Endothelial cell of umbilical vein (primary cell): ENCODE measurements at regions of chr2 and their contacts with region 1.

Region 1: GRCh38 chr2:190996338-190996946 is 17.5 kb downstream of the STAT1 start:
- DNase-seq: peak; percentile 48
- H3K4me3 ChIP-seq: no peak overlapping the region
- H3K27ac ChIP-seq: no peak overlapping the region
- H3K4me1 ChIP-seq: no peaks in the 10 kb centered on the region
- H3K27me3 ChIP-seq: no peaks in the 10 kb centered on the region
- CTCF ChIP-seq: peak; percentile 74 to 86
- POLR2A ChIP-seq: no peak

Region 2: DNA sequence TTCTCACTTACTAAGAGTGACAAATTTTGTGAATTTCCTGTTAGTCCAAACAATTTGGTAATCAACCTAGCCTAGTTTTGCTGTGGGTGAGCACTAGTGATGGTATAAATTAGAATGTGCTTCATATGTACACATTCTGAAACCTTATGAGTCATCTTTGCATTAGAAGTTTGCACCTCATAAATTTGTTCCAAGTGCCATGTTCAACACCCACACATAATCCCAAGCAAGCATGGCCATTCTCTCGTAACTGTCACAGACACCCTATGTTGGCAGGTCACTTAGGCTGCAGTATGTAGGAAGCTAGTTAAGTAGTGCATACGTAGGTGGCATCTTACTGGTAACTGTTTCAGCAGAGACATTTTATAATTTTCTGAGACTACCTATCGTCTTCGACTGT is 300.7 kb before region 1 on chr2:
- CTCF ChIA-PET with region 1: no interaction called
- POLR2A ChIA-PET with region 1: no interaction called
- dilution Hi-C with region 1: no loop called
- intact Hi-C with region 1: no loop called
- DNase-seq: no peak
- H3K4me3 ChIP-seq: no peak overlapping the region
- H3K27ac ChIP-seq: no peak overlapping the region
- H3K4me1 ChIP-seq: no peaks in the 10 kb centered on the region
- H3K27me3 ChIP-seq: no peaks in the 10 kb centered on the region
- CTCF ChIP-seq: no peak
- POLR2A ChIP-seq: no peak

Region 3: GRCh38 chr2:191008286-191008685 is 11.8 kb after region 1 on chr2:
- CTCF ChIA-PET with region 1: interaction called, 4 read pairs
- POLR2A ChIA-PET with region 1: no interaction called
- dilution Hi-C with region 1: no loop called
- intact Hi-C with region 1: loop called (anchors 1 kb)
- DNase-seq: no peak
- H3K4me3 ChIP-seq: no peak overlapping the region
- H3K27ac ChIP-seq: no peak overlapping the region
- H3K4me1 ChIP-seq: peaks cover 9% of the 10 kb centered on the region
- H3K27me3 ChIP-seq: no peaks in the 10 kb centered on the region
- CTCF ChIP-seq: no peak
- POLR2A ChIP-seq: no peak